ENCODE measurements at regions of chr1 and their contacts with region 1.

Region 1: GRCh38 chr1:191993549-191993948 is 164.7 kb upstream of the RGS18 start:
- DNase-seq: no peak
- ATAC-seq: peak in 1 of 8 donors; percentile 55
- H3K4me3 ChIP-seq: no peak overlapping the region
- H3K27ac ChIP-seq: no peak overlapping the region
- H3K4me1 ChIP-seq: no peaks in the 10 kb centered on the region
- H3K27me3 ChIP-seq: no peaks in the 10 kb centered on the region
- CTCF ChIP-seq: peak in 6 of 9 donors; percentile 5 to 39 (median 28)

Region 2: GRCh38 chr1:191714845-191715244 is 278.7 kb before region 1 on chr1:
- intact Hi-C with region 1: no loop called
- DNase-seq: no peak
- ATAC-seq: no peak
- H3K4me3 ChIP-seq: no peak overlapping the region
- H3K27ac ChIP-seq: no peak overlapping the region
- H3K4me1 ChIP-seq: no peaks in the 10 kb centered on the region
- H3K27me3 ChIP-seq: no peaks in the 10 kb centered on the region
- CTCF ChIP-seq: no peak

Region 3: GRCh38 chr1:192303029-192303428 is 309.5 kb after region 1 on chr1:
- intact Hi-C with region 1: loop called in 1 of 10 experiments (anchors 10 kb)
- DNase-seq: no peak
- ATAC-seq: no peak
- H3K4me3 ChIP-seq: no peak overlapping the region
- H3K27ac ChIP-seq: no peak overlapping the region
- H3K4me1 ChIP-seq: no peaks in the 10 kb centered on the region
- H3K27me3 ChIP-seq: no peaks in the 10 kb centered on the region
- CTCF ChIP-seq: no peak

Region 4: GRCh38 chr1:192445848-192446489 is 452.4 kb after region 1 on chr1:
- intact Hi-C with region 1: loop called in 3 of 10 experiments (anchors 5 to 10 kb)
- DNase-seq: peak in 1 of 2 donors; percentile 48
- ATAC-seq: no peak
- H3K4me3 ChIP-seq: peak overlapping the region in 1 of 10 donors; percentile 20
- H3K27ac ChIP-seq: no peak overlapping the region
- H3K4me1 ChIP-seq: no peaks in the 10 kb centered on the region
- H3K27me3 ChIP-seq: peaks cover 0 to 4% (median 0%) of the 10 kb centered on the region in 7 donors
- CTCF ChIP-seq: peak; percentile 76 to 90 (median 86)